Colonic mucosa (tissue), 4 donors: ENCODE measurements at regions of chr1 and their contacts with region 1.

Region 1: DNA sequence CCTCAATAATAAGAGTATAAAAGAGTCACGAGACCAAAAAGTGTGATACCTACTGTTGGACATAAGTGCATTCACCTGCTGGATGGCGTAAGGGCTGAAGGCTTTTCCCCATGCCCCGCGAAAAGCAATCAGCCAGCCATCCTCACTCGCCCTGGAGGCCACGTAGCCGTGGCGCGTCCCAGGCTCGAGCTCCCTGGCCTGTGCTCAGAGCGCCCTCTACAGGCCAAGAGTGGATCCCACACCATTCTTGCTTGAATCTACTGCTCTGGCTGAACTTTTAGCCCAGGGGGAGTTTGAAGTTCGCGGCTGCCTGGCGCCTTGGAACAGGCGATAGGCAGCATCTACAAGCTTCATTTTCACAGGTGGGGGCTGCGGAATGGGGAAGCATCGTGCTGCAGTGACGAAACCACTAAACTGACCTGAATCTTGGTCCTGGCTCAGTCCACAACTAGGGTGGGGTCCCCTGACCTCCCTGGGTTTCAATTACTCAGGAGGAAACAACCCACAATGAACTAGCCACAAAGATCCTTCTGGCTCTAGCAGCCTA is 70.3 kb upstream of the SERBP1 start:
- DNase-seq: peak; percentile 89
- H3K4me3 ChIP-seq: no peak overlapping the region
- H3K27ac ChIP-seq: no peak overlapping the region
- H3K4me1 ChIP-seq: no peaks in the 10 kb centered on the region
- H3K27me3 ChIP-seq: no peaks in the 10 kb centered on the region
- CTCF ChIP-seq: peak; percentile 96

Region 2: DNA sequence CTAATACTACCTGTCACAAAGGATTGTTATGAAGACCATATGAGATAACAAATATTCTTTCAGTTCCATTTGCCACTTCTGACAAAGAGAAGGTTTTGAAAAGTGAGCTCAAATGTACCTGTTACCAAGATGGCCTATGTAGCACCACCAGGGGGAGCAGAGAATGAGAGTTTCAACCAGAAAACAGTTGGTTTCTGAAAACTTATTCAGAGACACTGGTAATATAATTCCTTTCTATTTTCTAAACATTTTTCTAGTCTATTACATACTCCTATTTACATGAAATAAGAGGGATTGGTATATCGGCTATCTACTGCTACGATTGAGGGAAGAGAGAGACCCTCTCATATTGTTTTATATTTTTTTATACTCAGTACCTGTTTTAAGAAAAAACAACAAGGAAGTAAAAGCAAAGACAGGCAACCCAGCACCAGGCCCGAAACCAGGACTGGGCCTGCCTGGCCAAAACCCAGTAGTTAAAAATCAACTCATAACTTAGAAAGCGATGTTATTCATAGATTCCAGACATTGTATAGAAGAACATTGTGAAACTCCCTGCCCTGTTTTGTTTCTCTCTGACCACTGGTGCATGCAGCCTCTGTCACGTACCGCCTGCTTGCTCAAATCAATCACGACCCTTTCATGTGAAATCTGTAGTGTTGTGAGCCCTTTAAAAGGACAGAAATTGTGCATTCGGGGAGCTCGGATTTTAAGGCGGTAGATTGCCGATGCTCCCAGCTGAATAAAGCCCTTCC is 285.9 kb before region 1 on chr1:
- intact Hi-C with region 1: loop called (anchors 5 kb)
- DNase-seq: peak; percentile 24
- H3K4me3 ChIP-seq: no peak overlapping the region
- H3K27ac ChIP-seq: no peak overlapping the region
- H3K4me1 ChIP-seq: no peaks in the 10 kb centered on the region
- H3K27me3 ChIP-seq: no peaks in the 10 kb centered on the region
- CTCF ChIP-seq: peak; percentile 33

Region 3: DNA sequence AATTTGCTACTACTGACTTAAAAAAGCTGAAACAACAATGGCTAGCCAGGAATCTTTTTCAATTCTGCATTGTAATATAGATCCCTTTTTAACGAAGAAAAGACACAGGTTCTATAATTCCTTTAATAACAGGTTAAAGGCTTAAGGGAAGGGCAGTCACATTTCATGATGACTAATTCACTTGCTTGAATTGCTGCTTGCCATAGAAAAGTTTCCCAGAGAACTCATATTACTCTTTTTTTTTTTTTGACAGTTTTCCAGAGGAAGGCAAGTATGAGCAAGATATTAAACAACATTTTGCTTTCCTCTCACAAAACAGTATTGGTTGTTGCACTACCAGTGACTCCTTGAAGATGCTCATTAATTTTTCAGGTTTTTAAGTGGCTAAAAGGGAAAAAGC is 273.3 kb before region 1 on chr1:
- intact Hi-C with region 1: loop called (anchors 2 kb)
- DNase-seq: no peak
- H3K4me3 ChIP-seq: no peak overlapping the region
- H3K27ac ChIP-seq: no peak overlapping the region
- H3K4me1 ChIP-seq: no peaks in the 10 kb centered on the region
- H3K27me3 ChIP-seq: no peaks in the 10 kb centered on the region
- CTCF ChIP-seq: no peak

Region 4: DNA sequence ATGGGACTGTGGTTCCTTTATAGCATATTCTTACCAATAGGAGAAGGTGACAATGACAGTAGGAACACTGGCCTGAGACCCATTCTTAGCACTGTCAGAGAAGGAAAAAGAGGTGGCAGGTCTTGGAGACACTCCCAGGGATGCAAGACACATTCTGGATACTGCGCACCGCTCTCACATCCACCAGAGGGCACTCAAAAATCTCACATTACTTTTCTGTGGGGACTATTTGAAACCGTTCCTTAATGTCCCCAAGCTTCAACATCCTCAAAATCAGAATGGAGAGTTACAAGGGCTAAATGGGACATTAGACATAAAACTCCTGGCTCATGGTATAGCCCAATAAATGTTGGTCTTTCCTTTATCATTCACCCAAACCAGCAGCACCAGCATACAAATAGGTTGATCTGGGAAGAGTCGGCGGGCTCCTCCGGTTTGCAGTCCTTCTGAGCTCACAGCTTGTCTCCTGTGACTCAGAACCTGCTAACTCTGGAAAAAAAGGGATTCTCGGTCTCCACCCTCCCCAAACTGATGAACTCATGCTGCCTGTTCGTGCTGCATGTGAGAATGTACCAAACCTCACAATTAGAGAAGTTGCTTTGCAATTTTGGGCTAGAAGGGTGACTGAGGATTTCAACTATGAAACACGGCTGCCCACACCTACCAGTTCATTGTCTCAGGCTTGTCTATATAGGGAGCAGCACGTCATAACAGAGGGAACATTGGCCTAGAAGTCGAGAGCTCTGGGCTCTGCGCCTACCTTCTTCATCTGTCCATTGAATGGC is 152.6 kb before region 1 on chr1:
- intact Hi-C with region 1: loop called (anchors 2 kb)
- DNase-seq: peak; percentile 38
- H3K4me3 ChIP-seq: no peak overlapping the region
- H3K27ac ChIP-seq: no peak overlapping the region
- H3K4me1 ChIP-seq: no peaks in the 10 kb centered on the region
- H3K27me3 ChIP-seq: no peaks in the 10 kb centered on the region
- CTCF ChIP-seq: peak; percentile 60

Region 5: DNA sequence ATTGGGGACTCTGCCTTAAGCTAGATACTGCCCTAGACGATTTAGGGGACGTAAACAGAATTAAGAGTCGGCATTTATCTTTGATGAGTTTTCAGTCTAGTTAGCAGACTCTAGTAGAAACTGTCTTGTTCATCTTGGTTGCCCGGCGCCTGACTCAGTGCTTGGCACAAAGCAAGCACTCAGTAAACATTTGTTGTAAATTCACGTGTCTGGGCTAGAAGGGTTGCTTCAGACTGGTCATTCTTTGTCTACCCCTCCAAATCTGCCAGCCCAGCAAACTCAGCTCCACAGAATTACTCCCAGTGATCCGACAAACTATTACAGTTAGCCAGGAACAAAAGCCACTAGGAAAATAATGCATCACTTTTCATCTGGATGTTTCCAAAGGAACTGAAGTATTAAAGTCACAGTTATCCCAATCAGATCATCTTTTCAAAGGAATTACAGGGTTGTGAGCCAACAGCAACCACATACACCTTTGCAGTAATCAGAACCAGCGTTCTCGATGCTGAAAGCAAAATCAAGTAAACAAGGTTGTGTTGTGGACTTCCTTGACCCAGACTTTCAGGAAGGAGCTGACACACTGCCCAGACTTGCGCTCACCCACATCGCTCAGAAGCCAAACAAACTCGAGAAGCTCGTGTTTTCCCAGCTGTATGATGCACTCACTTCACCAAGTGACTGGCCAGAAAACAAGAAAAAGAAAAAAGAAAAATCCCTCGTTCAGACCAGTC is 118.0 kb after region 1 on chr1:
- intact Hi-C with region 1: no loop called
- DNase-seq: no peak
- H3K4me3 ChIP-seq: no peak overlapping the region
- H3K27ac ChIP-seq: peak overlapping the region; percentile 7
- H3K4me1 ChIP-seq: no peaks in the 10 kb centered on the region
- H3K27me3 ChIP-seq: no peaks in the 10 kb centered on the region
- CTCF ChIP-seq: no peak